ENCODE measurements at regions of chrX and their contacts with region 1.

Region 1: GRCh38 chrX:21524008-21524407 is 134.1 kb downstream of the KLHL34 start:
- DNase-seq: no peak
- H3K4me3 ChIP-seq: no peak overlapping the region
- H3K27ac ChIP-seq: no peak overlapping the region
- H3K4me1 ChIP-seq: no peaks in the 10 kb centered on the region
- H3K27me3 ChIP-seq: no peaks in the 10 kb centered on the region
- CTCF ChIP-seq: no peak

Region 2: GRCh38 chrX:21132686-21133393 is 391.2 kb before region 1 on chrX:
- CTCF ChIA-PET with region 1: no interaction called
- POLR2A ChIA-PET with region 1: no interaction called
- intact Hi-C with region 1: no loop called
- DNase-seq: no peak
- H3K4me3 ChIP-seq: no peak overlapping the region
- H3K27ac ChIP-seq: no peak overlapping the region
- H3K4me1 ChIP-seq: no peaks in the 10 kb centered on the region
- H3K27me3 ChIP-seq: no peaks in the 10 kb centered on the region
- CTCF ChIP-seq: no peak

Region 3: DNA sequence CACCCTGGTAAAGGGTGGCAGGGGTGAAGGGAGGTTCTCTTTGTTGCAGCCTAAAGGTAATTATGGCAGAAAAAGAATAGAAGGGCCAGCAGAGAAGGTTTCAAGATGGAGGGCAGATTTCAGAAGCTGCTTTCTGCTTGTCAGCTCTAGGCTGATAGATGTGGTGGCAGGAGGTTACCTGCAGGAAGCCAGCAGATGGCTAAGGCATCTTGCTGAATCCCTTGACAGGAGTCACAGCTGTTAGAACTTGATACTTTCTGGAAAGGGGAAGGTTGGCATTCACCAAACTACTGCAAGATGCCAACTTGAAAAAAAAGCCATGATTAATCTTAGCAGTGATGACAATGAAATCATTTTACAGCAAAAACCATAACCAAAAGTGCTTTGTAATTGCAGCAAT is 679.2 kb after region 1 on chrX:
- CTCF ChIA-PET with region 1: no interaction called
- POLR2A ChIA-PET with region 1: no interaction called
- intact Hi-C with region 1: no loop called
- DNase-seq: no peak
- H3K4me3 ChIP-seq: no peak overlapping the region
- H3K27ac ChIP-seq: no peak overlapping the region
- H3K4me1 ChIP-seq: no peaks in the 10 kb centered on the region
- H3K27me3 ChIP-seq: no peaks in the 10 kb centered on the region
- CTCF ChIP-seq: no peak

Region 4: DNA sequence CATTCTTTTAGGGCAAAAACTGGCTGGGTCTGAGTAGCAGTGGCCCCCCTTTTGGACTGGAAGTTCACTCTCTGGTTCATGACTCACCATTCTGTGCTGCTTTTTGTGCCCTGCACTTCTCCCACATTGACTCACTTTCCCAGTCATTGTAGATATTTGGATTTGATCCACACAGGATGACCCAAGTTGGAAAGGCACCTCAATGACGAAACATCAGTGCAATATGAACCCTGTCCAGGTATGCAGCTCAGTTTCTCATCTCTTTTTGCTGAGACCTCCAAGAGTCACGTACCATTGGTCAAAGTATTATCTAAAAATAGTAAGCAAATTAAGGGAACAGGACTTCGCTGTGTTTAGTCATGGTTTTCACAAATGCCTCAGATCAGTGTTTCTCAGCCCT is 841.5 kb after region 1 on chrX:
- CTCF ChIA-PET with region 1: no interaction called
- POLR2A ChIA-PET with region 1: interaction called, 12 read pairs
- intact Hi-C with region 1: no loop called
- DNase-seq: peak; percentile 55 to 83
- H3K4me3 ChIP-seq: no peak overlapping the region
- H3K27ac ChIP-seq: peak overlapping the region; percentile 89
- H3K4me1 ChIP-seq: peaks cover 8% of the 10 kb centered on the region
- H3K27me3 ChIP-seq: no peaks in the 10 kb centered on the region
- CTCF ChIP-seq: no peak

Measured in PC-9 (cell line).